ENCODE measurements at regions of chr7 and their contacts with region 1.

Region 1: DNA sequence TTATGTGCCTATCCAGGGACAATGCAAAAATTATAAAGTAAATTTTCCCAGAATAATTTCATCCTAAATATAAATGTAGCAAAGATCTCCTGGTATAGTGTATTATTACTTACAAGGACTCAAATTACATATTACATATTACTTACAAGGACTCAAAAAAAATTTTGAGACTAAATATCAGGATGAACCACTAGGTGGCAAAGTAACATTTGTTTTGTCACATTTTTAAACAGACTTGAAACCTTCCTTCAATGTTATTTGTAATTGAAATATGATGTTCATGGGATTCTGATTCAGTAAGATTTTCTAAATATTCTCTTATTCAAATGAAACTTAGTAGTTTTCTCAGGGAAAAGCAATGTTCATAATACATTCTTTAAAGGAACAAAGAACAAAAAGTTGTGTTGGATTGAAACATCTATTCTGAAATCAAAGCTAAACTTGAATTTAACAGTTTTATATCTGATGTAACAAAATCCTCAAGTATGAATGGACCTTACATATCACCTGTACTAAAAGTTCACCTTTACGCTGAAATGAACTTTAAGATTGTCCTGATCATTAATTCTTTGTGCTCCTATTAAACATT is 74.3 kb upstream of the GNAI1 start:
- H3K4me3 Mint-ChIP-seq: no peak overlapping the region
- H3K27ac Mint-ChIP-seq: no peak overlapping the region
- H3K4me1 Mint-ChIP-seq: no peaks in the 10 kb centered on the region
- H3K27me3 Mint-ChIP-seq: no peaks in the 10 kb centered on the region

Region 2: DNA sequence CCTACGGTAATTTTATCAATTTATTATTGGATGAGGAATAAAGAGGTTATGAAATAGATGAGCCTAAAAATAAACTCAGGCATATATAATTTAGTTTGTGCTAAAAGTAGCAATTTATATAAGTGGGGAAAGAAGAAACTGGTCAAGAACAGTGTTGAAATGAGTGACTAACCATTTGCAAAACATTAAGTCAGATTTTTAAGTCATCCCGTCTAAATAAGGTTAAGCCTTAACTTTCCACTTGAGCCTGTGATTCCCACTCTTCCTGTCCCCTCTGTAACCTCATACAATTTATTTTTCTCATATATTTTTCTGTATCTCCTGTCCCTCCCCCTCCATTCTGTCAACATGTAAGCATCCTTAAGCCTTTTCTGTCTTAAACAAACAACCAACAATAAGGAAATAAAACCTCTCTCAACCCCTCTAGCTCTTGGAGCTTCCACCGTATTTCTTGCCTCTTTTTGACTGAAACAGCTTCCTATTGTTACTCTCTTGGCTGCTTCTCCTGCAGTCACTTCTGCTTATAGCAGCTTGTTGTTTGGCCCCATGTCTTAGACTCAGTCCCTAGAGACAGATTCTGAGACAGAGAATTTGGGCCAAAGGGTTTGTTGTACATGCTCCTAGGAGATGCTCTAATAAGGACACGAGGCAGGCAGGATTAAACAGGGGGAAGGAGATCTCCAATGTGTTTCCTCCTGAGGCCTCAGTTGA is 184.0 kb after region 1 on chr7:
- intact Hi-C with region 1: no loop called
- H3K4me3 Mint-ChIP-seq: no peak overlapping the region
- H3K27ac Mint-ChIP-seq: no peak overlapping the region
- H3K4me1 Mint-ChIP-seq: no peaks in the 10 kb centered on the region
- H3K27me3 Mint-ChIP-seq: no peaks in the 10 kb centered on the region

Region 3: GRCh38 chr7:80392229-80393169 is 332.2 kb after region 1 on chr7:
- intact Hi-C with region 1: loop called (anchors 5 kb)
- H3K4me3 Mint-ChIP-seq: no peak overlapping the region
- H3K27ac Mint-ChIP-seq: no peak overlapping the region
- H3K4me1 Mint-ChIP-seq: no peaks in the 10 kb centered on the region
- H3K27me3 Mint-ChIP-seq: no peaks in the 10 kb centered on the region

Region 4: DNA sequence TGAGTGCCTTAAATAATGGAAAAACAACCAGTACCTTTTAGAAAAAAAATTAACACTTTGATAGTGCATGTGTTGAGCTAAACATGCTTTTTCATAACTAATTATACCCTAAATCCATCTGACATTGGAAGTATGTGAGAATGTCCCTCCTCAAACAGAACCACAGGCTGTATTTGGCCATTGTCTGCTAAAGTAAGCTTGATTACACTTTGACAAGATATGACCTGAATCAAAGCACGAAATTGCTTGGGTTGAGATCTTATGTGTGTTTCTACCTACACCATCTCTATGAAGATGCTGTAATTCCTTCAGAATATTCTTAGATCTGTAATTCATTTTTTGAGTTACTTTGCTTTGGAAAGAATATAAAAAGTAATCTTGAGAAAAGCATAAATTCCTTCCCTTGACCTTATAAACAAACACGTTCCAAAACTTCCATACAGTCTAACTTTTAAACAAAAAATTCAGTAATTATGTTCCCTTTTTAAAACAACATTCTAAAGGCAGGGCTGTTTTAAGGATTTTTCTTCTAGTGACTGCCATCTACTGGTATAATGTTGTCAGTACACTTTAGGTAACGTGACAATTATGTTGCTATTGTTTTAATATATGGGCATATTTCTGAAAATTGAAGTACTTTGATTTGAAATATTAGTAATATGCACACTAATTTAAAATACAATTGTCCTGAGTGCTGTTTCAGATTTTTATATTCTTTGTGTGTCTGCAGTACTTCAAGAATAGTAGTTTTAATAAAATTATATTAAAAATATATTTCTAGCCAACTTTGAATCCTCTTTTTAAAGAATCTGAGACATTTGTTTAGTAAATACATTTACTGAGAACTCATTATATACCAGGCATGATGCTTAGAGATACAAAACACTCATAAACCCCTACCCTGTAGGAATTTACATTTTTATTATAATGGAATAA is 599.1 kb after region 1 on chr7:
- intact Hi-C with region 1: loop called (anchors 1 kb)
- H3K4me3 Mint-ChIP-seq: no peak overlapping the region
- H3K27ac Mint-ChIP-seq: no peak overlapping the region
- H3K4me1 Mint-ChIP-seq: peaks cover 4% of the 10 kb centered on the region
- H3K27me3 Mint-ChIP-seq: no peaks in the 10 kb centered on the region

Measured in dendritic cell treated with granulocyte-macrophage colony-stimulating factor and Interleukin-4, amounts not matched to agents 40 ng/mL and 50 ng/mL, for 4 days (primary cell).